Caco-2 (cell line): ENCODE measurements at regions of chr1 and their contacts with region 1.

Region 1: DNA sequence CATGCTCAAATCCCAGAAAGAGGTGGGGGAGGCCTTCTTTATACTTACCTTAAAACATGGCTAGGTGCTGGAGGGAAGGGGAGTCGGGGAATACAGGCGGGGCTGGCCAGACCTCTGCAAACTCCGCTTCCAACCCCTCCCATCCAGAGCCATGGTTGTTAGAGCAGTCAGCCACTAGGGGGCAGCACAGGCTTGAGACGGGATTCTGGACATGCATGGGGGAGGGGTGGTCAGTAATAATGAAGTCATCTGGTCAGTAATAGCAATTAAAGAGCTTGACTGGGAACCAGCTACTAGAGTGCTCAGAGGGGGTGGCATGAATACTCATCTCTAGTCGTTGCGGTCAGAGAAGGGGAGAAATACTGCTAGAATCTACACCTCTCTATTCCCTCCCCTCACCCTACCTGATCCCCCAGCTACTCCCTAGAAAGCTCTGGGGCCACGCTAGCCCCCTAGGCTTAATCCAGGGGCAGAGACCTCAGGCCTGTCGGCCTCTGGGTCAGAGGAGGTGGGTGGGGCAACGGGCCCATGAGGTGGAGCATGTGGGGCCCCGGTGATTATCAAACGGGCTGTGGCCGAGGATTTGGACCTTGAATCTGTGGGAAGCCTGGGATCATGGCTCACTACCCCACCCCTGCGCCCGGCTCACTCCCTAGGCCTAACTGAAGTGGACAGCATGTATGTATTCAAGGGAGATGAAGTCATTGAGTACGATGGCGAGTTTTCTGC is 2.9 kb downstream of the CASQ1 start:
- DNase-seq: peak; percentile 83 to 90
- H3K4me3 ChIP-seq: no peak overlapping the region
- H3K4me3 Mint-ChIP-seq: no peak overlapping the region
- H3K27ac Mint-ChIP-seq: no peak overlapping the region
- H3K4me1 ChIP-seq: peaks cover 17% of the 10 kb centered on the region
- H3K4me1 Mint-ChIP-seq: no peaks in the 10 kb centered on the region
- H3K27me3 ChIP-seq: no peaks in the 10 kb centered on the region
- H3K27me3 Mint-ChIP-seq: no peaks in the 10 kb centered on the region
- CTCF ChIP-seq: peak; percentile 86 to 91

Region 2: DNA sequence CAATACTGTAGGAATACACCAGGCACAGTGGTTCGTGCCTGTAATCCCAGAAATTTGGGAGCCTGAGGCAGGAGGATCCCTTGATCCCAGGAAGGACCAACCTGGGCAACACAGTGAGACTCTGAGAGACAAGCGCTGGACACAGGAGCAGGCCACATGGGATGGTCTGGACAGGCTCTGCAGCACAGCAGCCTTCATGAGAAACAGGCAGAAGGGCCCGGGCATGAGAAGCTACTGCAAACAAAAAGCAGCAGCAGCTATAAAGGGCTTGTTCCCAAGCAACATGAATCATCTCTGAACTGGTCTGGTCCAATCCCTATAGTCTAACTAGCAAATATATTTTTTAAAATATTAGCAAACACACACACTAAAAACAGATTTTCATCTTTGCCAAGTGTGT is 203.7 kb before region 1 on chr1:
- CTCF ChIA-PET with region 1: no interaction called
- POLR2A ChIA-PET with region 1: no interaction called
- intact Hi-C with region 1: no loop called
- DNase-seq: no peak
- H3K4me3 ChIP-seq: no peak overlapping the region
- H3K4me3 Mint-ChIP-seq: no peak overlapping the region
- H3K27ac Mint-ChIP-seq: no peak overlapping the region
- H3K4me1 ChIP-seq: peaks cover 14% of the 10 kb centered on the region
- H3K4me1 Mint-ChIP-seq: peaks cover 8% of the 10 kb centered on the region
- H3K27me3 ChIP-seq: no peaks in the 10 kb centered on the region
- H3K27me3 Mint-ChIP-seq: no peaks in the 10 kb centered on the region
- CTCF ChIP-seq: no peak

Region 3: DNA sequence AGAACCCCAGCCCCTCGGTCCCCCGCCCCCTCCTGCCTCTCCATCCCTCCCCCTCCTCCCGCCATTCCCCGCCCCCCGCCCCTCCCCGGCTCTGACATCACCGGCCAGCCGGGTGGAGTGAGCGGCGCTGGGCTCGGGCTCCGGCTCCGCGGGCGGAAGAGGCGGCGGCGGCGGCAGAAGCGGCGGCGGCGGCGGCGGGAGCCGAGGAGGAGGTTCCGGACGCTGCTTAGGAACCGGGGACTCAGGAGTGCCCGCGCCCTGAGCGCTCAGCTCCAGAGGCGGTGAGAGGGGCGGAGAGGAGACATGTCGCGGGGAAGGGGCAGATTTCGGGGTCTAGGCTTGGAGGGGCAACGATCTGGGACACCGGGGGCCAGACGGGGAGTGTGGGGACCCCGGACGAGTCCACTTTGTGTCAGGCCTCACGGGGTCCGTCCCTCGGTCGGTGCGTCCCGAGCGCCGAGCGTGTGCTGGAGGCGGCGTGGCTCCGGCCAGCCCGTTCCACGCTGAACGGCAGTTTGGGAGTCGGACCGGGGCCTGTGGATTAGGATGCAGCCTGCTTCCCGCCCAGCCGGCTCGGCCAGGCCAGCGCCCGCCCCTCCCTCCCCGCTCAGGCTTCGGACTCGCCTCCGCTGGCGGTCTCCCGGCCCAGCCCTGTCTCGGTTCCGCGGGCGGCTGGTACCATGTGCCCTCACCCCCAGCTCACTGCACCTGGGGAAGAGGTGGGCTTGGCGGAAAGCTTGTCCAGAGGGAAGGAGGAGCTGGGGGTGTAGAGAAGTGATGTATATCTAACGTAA is 12.2 kb after region 1 on chr1 and contains the start of gene PEA15:
- CTCF ChIA-PET with region 1: interaction called, 11 read pairs
- POLR2A ChIA-PET with region 1: no interaction called
- intact Hi-C with region 1: no loop called
- DNase-seq: peak; percentile 67 to 82
- H3K4me3 ChIP-seq: peak within 1 kb of the TSS; percentile 97
- H3K4me3 Mint-ChIP-seq: peak within 1 kb of the TSS; percentile 81
- H3K27ac Mint-ChIP-seq: peak within 1 kb of the TSS; percentile 71
- H3K4me1 ChIP-seq: peaks cover 10% of the 10 kb centered on the region
- H3K4me1 Mint-ChIP-seq: peaks cover 18% of the 10 kb centered on the region
- H3K27me3 ChIP-seq: no peaks in the 10 kb centered on the region
- H3K27me3 Mint-ChIP-seq: no peaks in the 10 kb centered on the region
- CTCF ChIP-seq: no peak
- total RNA-seq, gene PEA15: 84.9 and 85.1 TPM in 2 replicates

Region 4: DNA sequence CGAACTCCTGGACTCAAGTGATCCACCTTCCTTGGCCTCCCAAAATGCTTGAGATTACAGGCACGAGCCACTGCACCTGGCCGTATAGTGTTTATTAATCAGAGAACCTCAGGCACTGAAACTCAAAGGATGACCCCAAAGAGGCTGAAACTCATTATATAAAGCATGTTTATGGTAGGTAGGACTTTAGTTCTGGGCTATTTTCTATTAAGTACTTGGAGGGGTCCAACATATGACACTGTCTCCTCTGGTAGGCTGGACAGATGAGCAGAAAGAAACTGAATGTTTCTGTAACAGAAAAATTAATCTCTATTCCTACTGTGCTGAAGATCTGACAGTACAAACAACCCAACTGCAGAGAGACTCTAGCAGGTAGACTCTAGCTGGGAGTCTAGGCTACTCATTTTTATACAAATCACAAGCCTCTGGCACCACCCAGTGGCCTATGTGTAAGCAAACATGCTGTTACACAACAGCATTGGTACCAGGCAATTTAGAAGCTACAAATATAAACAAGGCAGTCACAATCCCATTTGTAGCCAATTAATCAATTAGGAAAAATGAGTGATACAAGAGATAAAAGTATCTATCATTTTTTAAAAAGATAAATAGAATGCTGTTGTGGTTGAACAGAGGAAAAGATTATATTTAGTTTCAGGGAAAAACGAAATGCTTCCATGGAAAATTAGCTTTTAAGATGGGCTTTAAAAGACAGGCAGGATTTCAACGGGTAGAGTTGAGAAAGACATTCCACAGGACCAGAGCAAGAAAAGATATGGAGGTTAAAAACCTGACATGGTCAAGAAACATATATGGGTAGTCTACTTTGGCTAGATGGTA is 58.7 kb after region 1 on chr1:
- CTCF ChIA-PET with region 1: interaction called, 62 read pairs
- POLR2A ChIA-PET with region 1: no interaction called
- intact Hi-C with region 1: loop called (anchors 1 kb)
- DNase-seq: peak; percentile 68 to 69
- H3K4me3 ChIP-seq: no peak overlapping the region
- H3K4me3 Mint-ChIP-seq: no peak overlapping the region
- H3K27ac Mint-ChIP-seq: peak overlapping the region; percentile 34
- H3K4me1 ChIP-seq: no peaks in the 10 kb centered on the region
- H3K4me1 Mint-ChIP-seq: peaks cover 12% of the 10 kb centered on the region
- H3K27me3 ChIP-seq: no peaks in the 10 kb centered on the region
- H3K27me3 Mint-ChIP-seq: no peaks in the 10 kb centered on the region
- CTCF ChIP-seq: peak; percentile 67 to 77

Region 5: GRCh38 chr1:160291248-160292220 is 98.3 kb after region 1 on chr1:
- CTCF ChIA-PET with region 1: interaction called, 41 read pairs
- POLR2A ChIA-PET with region 1: no interaction called
- intact Hi-C with region 1: loop called (anchors 1 kb)
- DNase-seq: peak; percentile 71 to 72
- H3K4me3 ChIP-seq: no peak overlapping the region
- H3K4me3 Mint-ChIP-seq: no peak overlapping the region
- H3K27ac Mint-ChIP-seq: no peak overlapping the region
- H3K4me1 ChIP-seq: no peaks in the 10 kb centered on the region
- H3K4me1 Mint-ChIP-seq: peaks cover 4% of the 10 kb centered on the region
- H3K27me3 ChIP-seq: no peaks in the 10 kb centered on the region
- H3K27me3 Mint-ChIP-seq: no peaks in the 10 kb centered on the region
- CTCF ChIP-seq: peak; percentile 66 to 77